Caco-2 (cell line): ENCODE measurements at regions of chr20 and their contacts with region 1.

Region 1: GRCh38 chr20:48538420-48539203 is 289.2 kb downstream of the PREX1 start:
- DNase-seq: peak; percentile 90 to 94
- H3K4me3 ChIP-seq: no peak overlapping the region
- H3K4me3 Mint-ChIP-seq: peak overlapping the region; percentile 55
- H3K27ac Mint-ChIP-seq: peak overlapping the region; percentile 87
- H3K4me1 ChIP-seq: peaks cover 54% of the 10 kb centered on the region
- H3K4me1 Mint-ChIP-seq: peaks cover 51% of the 10 kb centered on the region
- H3K27me3 ChIP-seq: no peaks in the 10 kb centered on the region
- H3K27me3 Mint-ChIP-seq: no peaks in the 10 kb centered on the region
- CTCF ChIP-seq: no peak

Region 2: DNA sequence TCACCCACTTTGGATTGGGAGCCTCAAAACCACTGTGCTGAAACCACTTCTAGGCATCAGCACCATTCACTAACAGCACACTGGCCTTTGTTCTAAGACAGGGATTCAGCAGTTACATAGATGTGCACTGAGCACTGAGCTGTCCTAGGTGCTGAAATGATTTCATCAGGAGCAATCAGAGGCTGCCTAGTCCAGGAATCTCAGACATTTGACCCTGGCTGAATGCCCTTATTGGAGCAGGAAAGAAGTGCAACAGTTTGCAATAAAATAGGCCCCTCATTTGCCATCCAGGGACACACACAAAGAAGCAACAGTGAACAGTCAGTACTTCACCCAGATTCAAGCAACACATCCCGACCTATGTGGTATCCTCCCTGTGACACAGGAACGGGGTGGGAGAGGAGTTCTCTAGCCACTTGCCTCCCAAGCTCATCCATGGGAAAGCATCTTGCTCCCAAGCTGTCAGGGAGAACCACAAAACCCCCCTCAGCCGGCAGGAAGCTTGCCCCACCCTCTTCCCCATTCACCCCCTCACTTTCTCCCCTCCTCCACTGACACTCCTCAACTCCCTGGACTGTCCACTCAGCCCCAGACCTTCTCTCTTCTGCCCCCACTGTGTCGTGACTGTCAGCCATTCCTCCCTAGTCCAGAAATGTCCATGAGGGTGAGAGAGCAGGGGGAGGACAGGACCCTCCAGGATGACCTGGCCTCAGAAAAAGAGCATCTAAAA is 15.2 kb before region 1 on chr20:
- CTCF ChIA-PET with region 1: interaction called, 3 read pairs
- POLR2A ChIA-PET with region 1: no interaction called
- intact Hi-C with region 1: loop called (anchors 1 kb)
- DNase-seq: peak; percentile 89 to 93
- H3K4me3 ChIP-seq: no peak overlapping the region
- H3K4me3 Mint-ChIP-seq: no peak overlapping the region
- H3K27ac Mint-ChIP-seq: no peak overlapping the region
- H3K4me1 ChIP-seq: no peaks in the 10 kb centered on the region
- H3K4me1 Mint-ChIP-seq: no peaks in the 10 kb centered on the region
- H3K27me3 ChIP-seq: no peaks in the 10 kb centered on the region
- H3K27me3 Mint-ChIP-seq: no peaks in the 10 kb centered on the region
- CTCF ChIP-seq: no peak

Region 3: GRCh38 chr20:48568143-48568919 is 29.7 kb after region 1 on chr20:
- CTCF ChIA-PET with region 1: no interaction called
- POLR2A ChIA-PET with region 1: no interaction called
- intact Hi-C with region 1: no loop called
- DNase-seq: no peak
- H3K4me3 ChIP-seq: no peak overlapping the region
- H3K4me3 Mint-ChIP-seq: no peak overlapping the region
- H3K27ac Mint-ChIP-seq: no peak overlapping the region
- H3K4me1 ChIP-seq: 0 out of 2 replicates have a peak, but pooled peaks cover 4% of the 10 kb centered on the region
- H3K4me1 Mint-ChIP-seq: no peaks in the 10 kb centered on the region
- H3K27me3 ChIP-seq: no peaks in the 10 kb centered on the region
- H3K27me3 Mint-ChIP-seq: peaks cover 3% of the 10 kb centered on the region
- CTCF ChIP-seq: no peak